ENCODE measurements at regions of chr1 and their contacts with region 1.

Region 1: DNA sequence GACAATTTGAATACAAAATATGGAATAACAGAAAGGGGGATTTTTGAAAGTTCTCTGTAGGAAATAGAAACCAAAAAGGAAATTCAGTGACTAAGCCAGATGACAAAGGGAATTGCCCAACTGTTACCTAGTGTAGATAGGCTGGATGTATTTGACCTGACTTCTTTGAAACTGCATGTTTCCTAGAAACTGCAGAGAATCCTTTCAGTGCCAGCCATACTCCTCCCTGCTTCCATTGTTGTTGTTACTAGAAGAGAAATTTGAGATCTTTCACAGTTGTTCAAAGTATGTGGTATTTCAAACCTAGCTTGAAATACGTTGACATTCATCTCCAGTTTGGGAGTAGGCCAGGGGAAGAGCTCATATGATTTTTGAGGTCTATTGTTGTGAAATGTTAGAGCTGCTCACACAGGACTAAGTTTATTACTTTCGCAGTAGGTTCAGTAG is 1.8 kb upstream of the GBP5 start:
- DNase-seq: peak; percentile 43 to 63 (median 49)
- H3K4me3 ChIP-seq: peak overlapping the region in 1 of 2 donors; percentile 29
- H3K4me3 Mint-ChIP-seq: peak overlapping the region; percentile 78 to 90 (median 88)
- H3K27ac ChIP-seq: peak overlapping the region; percentile 74
- H3K27ac Mint-ChIP-seq: peak overlapping the region; percentile 93 to 99 (median 98)
- H3K4me1 ChIP-seq: peaks cover 68% of the 10 kb centered on the region
- H3K4me1 Mint-ChIP-seq: peaks cover 46 to 91% (median 62%) of the 10 kb centered on the region in 4 donors
- H3K27me3 ChIP-seq: no peaks in the 10 kb centered on the region
- H3K27me3 Mint-ChIP-seq: no peaks in the 10 kb centered on the region

Region 2: DNA sequence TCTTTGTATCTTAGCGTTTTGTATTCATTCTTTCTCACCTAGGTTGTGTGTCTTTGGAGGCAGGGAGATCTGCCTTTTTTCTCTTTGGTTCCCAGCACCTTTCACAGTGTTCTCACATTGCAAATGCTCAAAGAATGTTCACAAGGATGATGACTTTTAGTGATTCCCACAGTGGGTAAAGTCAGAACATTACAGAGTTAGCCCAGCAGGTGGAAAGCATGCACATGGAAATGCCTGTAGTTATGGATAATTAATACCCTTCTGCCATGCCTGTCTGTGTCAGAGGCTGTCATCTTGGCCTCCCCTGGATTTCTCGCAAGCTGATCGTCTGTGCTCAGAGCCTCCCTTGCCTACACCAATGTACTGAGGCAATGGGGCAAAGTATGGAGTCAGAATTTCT is 1486.9 kb before region 1 on chr1:
- CTCF ChIA-PET with region 1: no interaction called
- POLR2A ChIA-PET with region 1: no interaction called
- intact Hi-C with region 1: no loop called
- DNase-seq: no peak
- H3K4me3 ChIP-seq: no peak overlapping the region
- H3K4me3 Mint-ChIP-seq: no peak overlapping the region
- H3K27ac ChIP-seq: no peak overlapping the region
- H3K27ac Mint-ChIP-seq: no peak overlapping the region
- H3K4me1 ChIP-seq: no peaks in the 10 kb centered on the region
- H3K4me1 Mint-ChIP-seq: no peaks in the 10 kb centered on the region
- H3K27me3 ChIP-seq: no peaks in the 10 kb centered on the region
- H3K27me3 Mint-ChIP-seq: peaks cover 6 to 9% of the 10 kb centered on the region in 2 donors

Region 3: GRCh38 chr1:88983791-88984559 is 290.5 kb before region 1 on chr1:
- CTCF ChIA-PET with region 1: interaction called, 23 read pairs
- POLR2A ChIA-PET with region 1: interaction called, 3 read pairs
- intact Hi-C with region 1: no loop called
- DNase-seq: peak; percentile 63 to 73 (median 69)
- H3K4me3 ChIP-seq: no peak overlapping the region
- H3K4me3 Mint-ChIP-seq: peak overlapping the region; percentile 8 to 85 (median 64)
- H3K27ac ChIP-seq: peak overlapping the region; percentile 27
- H3K27ac Mint-ChIP-seq: peak overlapping the region; percentile 17 to 90 (median 85)
- H3K4me1 ChIP-seq: peaks cover 54% of the 10 kb centered on the region
- H3K4me1 Mint-ChIP-seq: peaks cover 43 to 82% (median 60%) of the 10 kb centered on the region in 4 donors
- H3K27me3 ChIP-seq: no peaks in the 10 kb centered on the region
- H3K27me3 Mint-ChIP-seq: no peaks in the 10 kb centered on the region

Region 4: DNA sequence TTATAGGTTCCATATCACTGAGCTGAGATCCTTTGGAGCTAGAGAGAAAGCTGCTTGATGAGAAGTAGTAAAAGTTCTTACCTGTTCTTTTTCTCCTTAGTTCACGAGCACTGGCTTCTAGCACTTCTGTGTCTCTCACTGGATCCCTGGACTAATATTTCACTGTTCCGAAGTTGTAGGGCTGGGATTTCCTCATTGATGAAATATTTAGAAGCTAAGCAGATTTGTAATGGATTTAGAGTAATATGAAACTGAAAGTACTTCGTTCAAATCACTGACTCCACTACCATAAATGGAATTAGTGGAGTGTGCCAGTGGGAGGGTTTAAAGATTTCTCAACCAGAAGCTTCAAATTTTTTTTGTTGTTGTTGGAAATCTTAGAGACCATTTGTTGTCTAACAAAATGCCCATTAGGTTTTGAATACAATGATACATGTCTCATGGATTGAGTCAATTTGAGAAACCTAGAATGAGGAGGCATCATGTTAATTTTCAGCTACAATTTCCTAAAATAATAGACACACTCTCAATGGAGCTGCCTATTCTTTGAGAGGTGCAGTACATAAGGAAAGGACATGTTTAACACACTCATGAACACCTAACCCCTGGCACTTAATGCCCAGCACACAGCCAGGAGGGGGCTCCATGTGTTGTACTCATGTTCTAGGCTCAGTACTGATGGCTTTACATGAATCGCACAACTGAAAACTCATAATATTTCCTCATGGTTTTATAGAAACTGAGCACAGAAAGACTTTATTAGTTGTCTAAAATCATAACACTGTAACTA is 209.2 kb before region 1 on chr1 and contains the start of gene GBP1:
- CTCF ChIA-PET with region 1: interaction called, 4 read pairs
- POLR2A ChIA-PET with region 1: interaction called, 5 read pairs
- intact Hi-C with region 1: loop called (anchors 5 kb)
- DNase-seq: peak; percentile 51 to 57 (median 53)
- H3K4me3 ChIP-seq: peak within 1 kb of the TSS; percentile 65 to 74
- H3K4me3 Mint-ChIP-seq: peak within 1 kb of the TSS; percentile 90 to 100 (median 98)
- H3K27ac ChIP-seq: peak within 1 kb of the TSS; percentile 85
- H3K27ac Mint-ChIP-seq: peak within 1 kb of the TSS; percentile 94 to 100 (median 96)
- H3K4me1 ChIP-seq: peaks cover 56% of the 10 kb centered on the region
- H3K4me1 Mint-ChIP-seq: peaks cover 37 to 70% (median 51%) of the 10 kb centered on the region in 4 donors
- H3K27me3 ChIP-seq: no peaks in the 10 kb centered on the region
- H3K27me3 Mint-ChIP-seq: no peaks in the 10 kb centered on the region
- total RNA-seq, gene GBP1: 74.1 to 74.2 TPM

Region 5: GRCh38 chr1:89198491-89199072 is 75.9 kb before region 1 on chr1 and contains the start of gene GBP4:
- CTCF ChIA-PET with region 1: interaction called, 34 read pairs
- POLR2A ChIA-PET with region 1: interaction called, 74 read pairs
- intact Hi-C with region 1: loop called (anchors 1 kb)
- DNase-seq: peak; percentile 36 to 58 (median 45)
- H3K4me3 ChIP-seq: peak within 1 kb of the TSS; percentile 80
- H3K4me3 Mint-ChIP-seq: peak within 1 kb of the TSS; percentile 96 to 99 (median 98)
- H3K27ac ChIP-seq: peak within 1 kb of the TSS; percentile 85
- H3K27ac Mint-ChIP-seq: peak within 1 kb of the TSS; percentile 94 to 99 (median 95)
- H3K4me1 ChIP-seq: peaks cover 60% of the 10 kb centered on the region
- H3K4me1 Mint-ChIP-seq: peaks cover 48 to 88% (median 63%) of the 10 kb centered on the region in 4 donors
- H3K27me3 ChIP-seq: no peaks in the 10 kb centered on the region
- H3K27me3 Mint-ChIP-seq: no peaks in the 10 kb centered on the region
- total RNA-seq, gene GBP4: 48.5 to 49.5 TPM

Region 6: DNA sequence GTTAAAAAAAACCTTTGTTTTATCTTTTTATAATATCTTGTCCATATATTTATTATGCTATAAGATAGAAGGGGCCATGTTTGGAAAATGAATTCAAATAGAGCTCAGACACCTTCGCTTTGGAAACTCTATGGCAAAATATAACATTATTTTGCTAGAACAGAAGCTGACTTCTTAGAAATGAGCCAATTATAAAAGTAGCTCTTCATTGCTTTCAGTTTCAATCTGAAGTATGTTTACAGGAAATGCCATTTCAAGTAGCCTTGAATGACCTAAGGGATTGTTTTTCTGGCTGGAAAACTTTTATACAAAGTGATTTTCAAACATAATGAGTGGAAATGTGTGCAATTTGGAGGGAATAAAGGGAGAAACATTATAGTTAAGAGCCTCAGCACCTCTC is 36.1 kb after region 1 on chr1:
- CTCF ChIA-PET with region 1: interaction called, 16 read pairs
- POLR2A ChIA-PET with region 1: interaction called, 33 read pairs
- intact Hi-C with region 1: loop called (anchors 5 kb)
- DNase-seq: peak in 3 of 5 donors; percentile 17 to 27 (median 18)
- H3K4me3 ChIP-seq: peak overlapping the region in 1 of 2 donors; percentile 7
- H3K4me3 Mint-ChIP-seq: peak overlapping the region; percentile 37 to 84 (median 70)
- H3K27ac ChIP-seq: no peak overlapping the region
- H3K27ac Mint-ChIP-seq: peak overlapping the region; percentile 62 to 94 (median 81)
- H3K4me1 ChIP-seq: peaks cover 62% of the 10 kb centered on the region
- H3K4me1 Mint-ChIP-seq: peaks cover 30 to 66% (median 47%) of the 10 kb centered on the region in 4 donors
- H3K27me3 ChIP-seq: no peaks in the 10 kb centered on the region
- H3K27me3 Mint-ChIP-seq: no peaks in the 10 kb centered on the region

Region 7: GRCh38 chr1:89605692-89606091 is 331.3 kb after region 1 on chr1:
- CTCF ChIA-PET with region 1: no interaction called
- POLR2A ChIA-PET with region 1: no interaction called
- intact Hi-C with region 1: loop called (anchors 10 kb)
- DNase-seq: no peak
- H3K4me3 ChIP-seq: peak overlapping the region in 1 of 2 donors; percentile 0
- H3K4me3 Mint-ChIP-seq: peak overlapping the region in 6 of 8 donors; percentile 29 to 97 (median 64)
- H3K27ac ChIP-seq: peak overlapping the region; percentile 84
- H3K27ac Mint-ChIP-seq: peak overlapping the region; percentile 98 to 100 (median 99)
- H3K4me1 ChIP-seq: peaks cover 95% of the 10 kb centered on the region
- H3K4me1 Mint-ChIP-seq: peaks cover 73 to 98% (median 87%) of the 10 kb centered on the region in 4 donors
- H3K27me3 ChIP-seq: no peaks in the 10 kb centered on the region
- H3K27me3 Mint-ChIP-seq: no peaks in the 10 kb centered on the region

Measured in CD4-positive, alpha-beta memory T cell (primary cell).